ENCODE measurements at regions of chr16 and their contacts with region 1.

Region 1: GRCh38 chr16:23640931-23641765 is at the starts of genes DCTN5 and PALB2:
- DNase-seq: peak; percentile 97
- H3K4me3 Mint-ChIP-seq: peak within 1 kb of the TSS; percentile 97
- H3K27ac Mint-ChIP-seq: peak within 1 kb of the TSS; percentile 93
- H3K4me1 Mint-ChIP-seq: peaks cover 32% of the 10 kb centered on the region
- H3K27me3 Mint-ChIP-seq: no peaks in the 10 kb centered on the region
- total RNA-seq, gene DCTN5: 98.3 and 99.4 TPM in 2 replicates
- total RNA-seq, gene PALB2: 31.2 and 35.7 TPM in 2 replicates

Region 2: DNA sequence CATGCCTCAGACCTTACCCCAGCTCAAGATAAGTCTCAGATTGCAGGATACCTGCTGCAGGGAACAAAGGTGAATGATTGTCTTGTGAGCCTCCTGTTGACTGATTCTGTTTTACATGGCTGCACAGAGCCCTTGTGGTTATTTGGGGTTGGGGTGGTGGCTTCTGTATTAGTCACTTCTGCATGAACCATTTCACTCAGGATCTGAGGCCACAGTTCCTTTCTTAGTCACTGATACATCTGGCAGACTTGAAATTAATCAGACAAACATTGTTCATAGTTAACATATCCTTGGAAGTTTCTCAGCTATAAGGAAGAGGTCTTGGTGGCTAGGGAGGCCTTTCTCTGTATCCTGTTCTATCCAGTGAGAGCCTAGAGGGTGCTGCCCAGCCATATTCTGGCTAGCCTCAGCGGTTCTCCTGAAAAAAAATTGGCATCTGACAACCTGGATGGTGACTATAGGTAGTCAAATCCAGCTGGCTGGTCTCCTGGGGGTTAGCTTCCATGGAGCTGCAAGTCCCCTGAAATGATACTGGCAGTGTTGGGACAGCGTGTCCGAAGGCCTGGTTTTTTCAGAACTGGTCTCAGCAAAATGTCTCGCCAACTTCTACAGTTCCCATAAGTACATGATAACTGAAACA is 29.1 kb after region 1 on chr16:
- intact Hi-C with region 1: loop called (anchors 1 kb)
- DNase-seq: peak; percentile 80
- H3K4me3 Mint-ChIP-seq: peak overlapping the region; percentile 28
- H3K27ac Mint-ChIP-seq: peak overlapping the region; percentile 66
- H3K4me1 Mint-ChIP-seq: peaks cover 20% of the 10 kb centered on the region
- H3K27me3 Mint-ChIP-seq: no peaks in the 10 kb centered on the region

Region 3: DNA sequence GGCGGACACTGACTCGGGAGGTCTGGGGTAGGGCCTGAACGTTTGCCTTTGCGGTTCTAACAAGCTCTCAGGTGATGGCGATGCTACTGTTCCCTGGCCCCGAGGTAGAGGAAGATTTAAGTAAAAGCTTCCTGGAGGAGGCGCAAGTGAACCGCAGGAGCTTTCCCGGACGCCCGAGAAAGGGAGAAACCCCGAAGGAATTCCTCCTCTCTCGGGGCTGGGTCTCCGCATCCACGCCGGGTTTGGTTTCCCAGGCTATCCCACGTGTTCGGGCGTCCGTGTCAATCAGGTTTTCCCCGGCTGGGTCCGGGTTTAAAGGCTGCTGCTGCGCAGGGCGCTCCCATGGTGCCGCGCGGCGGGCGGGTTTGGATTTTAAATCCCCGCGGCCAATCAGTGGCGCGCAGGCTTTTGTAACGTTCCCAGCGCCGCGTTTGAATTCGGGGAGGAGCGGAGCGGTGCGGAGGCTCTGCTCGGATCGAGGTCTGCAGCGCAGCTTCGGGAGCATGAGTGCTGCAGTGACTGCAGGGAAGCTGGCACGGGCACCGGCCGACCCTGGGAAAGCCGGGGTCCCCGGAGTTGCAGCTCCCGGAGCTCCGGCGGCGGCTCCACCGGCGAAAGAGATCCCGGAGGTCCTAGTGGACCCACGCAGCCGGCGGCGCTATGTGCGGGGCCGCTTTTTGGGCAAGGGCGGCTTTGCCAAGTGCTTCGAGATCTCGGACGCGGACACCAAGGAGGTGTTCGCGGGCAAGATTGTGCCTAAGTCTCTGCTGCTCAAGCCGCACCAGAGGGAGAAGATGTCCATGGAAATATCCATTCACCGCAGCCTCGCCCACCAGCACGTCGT is 37.5 kb after region 1 on chr16 and contains the start of gene PLK1:
- intact Hi-C with region 1: loop called (anchors 2 kb)
- DNase-seq: peak; percentile 96
- H3K4me3 Mint-ChIP-seq: peak within 1 kb of the TSS; percentile 92
- H3K27ac Mint-ChIP-seq: peak within 1 kb of the TSS; percentile 85
- H3K4me1 Mint-ChIP-seq: peaks cover 36% of the 10 kb centered on the region
- H3K27me3 Mint-ChIP-seq: no peaks in the 10 kb centered on the region
- total RNA-seq, gene PLK1: 45.7 and 51.7 TPM in 2 replicates

Measured in activated CD4-positive, alpha-beta T cell treated with anti-CD3 and anti-CD28 coated beads, Interleukin-2, amount 10 ng/mL, durations not matched to agents 24 days and 14 days (primary cell).